Ovary (tissue), 10 donors: ENCODE measurements at regions of chr16 and their contacts with region 1.

Region 1: GRCh38 chr16:87387942-87388817 is 4.0 kb upstream of the MAP1LC3B start:
- DNase-seq: peak; percentile 86 to 95 (median 91)
- H3K4me3 ChIP-seq: peak overlapping the region; percentile 24
- H3K27ac ChIP-seq: peak overlapping the region; percentile 49 to 89
- H3K4me1 ChIP-seq: peaks cover 5% of the 10 kb centered on the region
- H3K27me3 ChIP-seq: no peaks in the 10 kb centered on the region
- CTCF ChIP-seq: peak in 1 of 3 donors; percentile 16
- EP300 ChIP-seq: peak; percentile 94
- POLR2A ChIP-seq: peak; percentile 67

Region 2: DNA sequence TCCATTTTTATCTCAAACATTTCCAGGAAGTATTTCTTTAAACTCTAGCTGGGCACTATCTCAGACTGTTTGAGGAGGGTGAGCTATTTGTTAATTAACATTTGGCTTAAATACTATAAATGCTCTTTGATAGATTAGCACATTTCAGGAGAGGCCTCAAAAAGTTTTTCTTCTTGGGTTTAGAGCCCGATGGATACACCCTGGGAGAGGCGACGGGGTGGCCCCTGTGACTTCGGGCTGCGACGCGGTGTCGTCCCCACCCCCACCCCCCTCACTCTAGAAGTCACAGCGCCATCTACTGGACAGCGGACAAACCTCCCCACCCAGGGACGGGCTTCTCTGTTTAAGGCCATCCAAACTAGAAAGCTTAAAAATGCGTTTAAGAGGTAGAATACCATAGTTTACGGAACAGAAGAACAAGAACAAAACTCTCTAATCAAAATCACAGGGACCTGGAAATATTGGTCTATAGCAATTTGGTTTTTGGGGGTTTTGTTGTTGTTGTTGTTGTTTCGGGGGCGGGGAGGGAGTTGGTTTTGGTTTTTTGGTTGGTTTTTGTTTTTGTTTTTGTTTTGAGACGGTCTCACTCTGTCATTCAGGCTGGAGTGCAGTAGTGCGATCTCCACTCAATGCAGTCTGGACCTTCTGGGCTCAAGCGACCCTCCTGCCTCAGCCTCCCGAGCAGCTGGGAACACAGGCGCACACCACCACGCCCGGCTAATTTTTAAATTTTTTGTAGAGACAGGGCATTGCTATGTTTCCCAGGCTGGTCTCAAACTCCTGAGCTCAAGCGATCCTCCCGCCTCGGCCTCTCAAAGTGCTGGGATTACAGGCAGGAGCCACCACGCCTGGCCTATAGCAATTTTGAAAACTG is 325.4 kb before region 1 on chr16:
- intact Hi-C with region 1: no loop called
- DNase-seq: peak; percentile 50 to 73 (median 59)
- H3K4me3 ChIP-seq: no peak overlapping the region
- H3K27ac ChIP-seq: no peak overlapping the region
- H3K4me1 ChIP-seq: no peaks in the 10 kb centered on the region
- H3K27me3 ChIP-seq: no peaks in the 10 kb centered on the region
- CTCF ChIP-seq: peak; percentile 31 to 47 (median 34)
- EP300 ChIP-seq: no peak
- POLR2A ChIP-seq: no peak

Region 3: DNA sequence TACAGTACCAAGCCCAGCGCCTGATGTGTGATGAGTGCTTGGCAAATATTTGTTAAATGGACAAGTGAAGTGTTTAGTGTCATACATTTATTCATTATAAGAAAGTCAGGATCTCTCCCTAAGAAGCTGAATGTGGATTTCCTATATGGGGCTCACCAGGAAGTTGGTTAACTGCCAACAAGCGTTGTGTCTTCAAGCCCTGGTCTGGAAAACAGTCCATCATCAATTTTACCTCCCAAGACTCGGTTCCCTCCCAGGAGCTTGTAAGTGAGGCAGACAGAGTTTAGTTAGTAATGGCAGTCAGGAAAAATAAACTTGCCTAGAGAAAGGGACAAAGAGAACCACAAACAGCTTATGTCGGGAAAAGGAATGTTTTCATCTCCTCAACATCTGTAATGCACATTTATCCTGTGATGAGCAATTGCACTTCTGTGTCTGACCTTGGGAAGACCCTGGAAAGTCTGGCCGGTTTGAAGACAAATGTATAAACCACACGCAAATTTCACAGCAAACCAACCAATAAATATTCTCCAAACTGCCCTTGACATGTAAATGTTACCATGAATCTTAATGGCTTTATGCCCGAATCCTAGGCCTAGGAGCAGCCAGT is 99.3 kb before region 1 on chr16:
- intact Hi-C with region 1: no loop called
- DNase-seq: no peak
- H3K4me3 ChIP-seq: no peak overlapping the region
- H3K27ac ChIP-seq: no peak overlapping the region
- H3K4me1 ChIP-seq: no peaks in the 10 kb centered on the region
- H3K27me3 ChIP-seq: no peaks in the 10 kb centered on the region
- CTCF ChIP-seq: no peak
- EP300 ChIP-seq: no peak
- POLR2A ChIP-seq: no peak

Region 4: DNA sequence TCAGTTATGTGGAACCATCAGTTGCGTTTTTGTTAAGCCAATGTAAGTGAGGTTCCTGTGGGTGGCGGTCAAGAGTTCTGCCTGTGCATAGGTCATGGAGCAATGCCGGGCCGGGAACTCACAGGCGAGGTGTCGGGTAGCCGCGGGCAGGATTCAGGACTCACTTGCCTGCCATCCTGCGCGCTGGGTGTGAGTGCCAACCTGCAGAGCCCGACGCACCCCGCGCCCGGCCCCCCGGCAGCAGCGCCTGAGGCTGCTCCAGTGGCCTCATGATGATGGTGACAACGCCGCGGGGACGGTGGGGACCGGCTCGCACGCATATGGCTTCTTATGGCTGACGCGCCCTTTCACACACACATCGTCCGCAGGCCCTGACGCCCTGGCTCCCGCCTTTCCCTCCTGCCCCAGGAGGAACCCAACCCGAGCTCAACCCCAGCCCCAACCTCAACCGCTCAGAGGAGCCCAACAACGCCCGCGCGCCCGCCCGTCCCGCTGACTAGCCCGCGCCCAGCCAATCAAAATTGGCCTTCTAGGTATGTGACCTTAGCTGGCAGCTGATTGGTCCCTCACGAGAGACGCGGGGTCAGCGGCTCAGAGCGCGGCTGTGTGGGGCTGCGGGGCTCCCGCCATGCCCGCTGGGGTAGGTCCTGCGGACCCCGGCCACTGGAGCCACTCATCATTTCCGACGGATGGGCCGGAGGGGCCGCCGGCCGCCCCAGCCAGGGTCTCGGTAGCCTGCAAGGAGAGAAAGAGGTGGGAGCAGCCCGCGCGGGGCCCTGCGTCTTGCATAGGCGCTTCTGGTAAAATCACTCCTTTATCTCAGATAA is 71.0 kb before region 1 on chr16 and contains the start of gene C16orf95:
- intact Hi-C with region 1: loop called in 2 of 4 experiments (anchors 5 to 10 kb)
- DNase-seq: peak; percentile 95 to 98 (median 98)
- H3K4me3 ChIP-seq: peak within 1 kb of the TSS; percentile 87
- H3K27ac ChIP-seq: peak within 1 kb of the TSS; percentile 87 to 88
- H3K4me1 ChIP-seq: no peaks in the 10 kb centered on the region
- H3K27me3 ChIP-seq: no peaks in the 10 kb centered on the region
- CTCF ChIP-seq: peak; percentile 39 to 75 (median 60)
- EP300 ChIP-seq: no peak
- POLR2A ChIP-seq: peak; percentile 96
- total RNA-seq, gene C16orf95: 1.0 to 6.1 (median 2.8) TPM

Region 5: DNA sequence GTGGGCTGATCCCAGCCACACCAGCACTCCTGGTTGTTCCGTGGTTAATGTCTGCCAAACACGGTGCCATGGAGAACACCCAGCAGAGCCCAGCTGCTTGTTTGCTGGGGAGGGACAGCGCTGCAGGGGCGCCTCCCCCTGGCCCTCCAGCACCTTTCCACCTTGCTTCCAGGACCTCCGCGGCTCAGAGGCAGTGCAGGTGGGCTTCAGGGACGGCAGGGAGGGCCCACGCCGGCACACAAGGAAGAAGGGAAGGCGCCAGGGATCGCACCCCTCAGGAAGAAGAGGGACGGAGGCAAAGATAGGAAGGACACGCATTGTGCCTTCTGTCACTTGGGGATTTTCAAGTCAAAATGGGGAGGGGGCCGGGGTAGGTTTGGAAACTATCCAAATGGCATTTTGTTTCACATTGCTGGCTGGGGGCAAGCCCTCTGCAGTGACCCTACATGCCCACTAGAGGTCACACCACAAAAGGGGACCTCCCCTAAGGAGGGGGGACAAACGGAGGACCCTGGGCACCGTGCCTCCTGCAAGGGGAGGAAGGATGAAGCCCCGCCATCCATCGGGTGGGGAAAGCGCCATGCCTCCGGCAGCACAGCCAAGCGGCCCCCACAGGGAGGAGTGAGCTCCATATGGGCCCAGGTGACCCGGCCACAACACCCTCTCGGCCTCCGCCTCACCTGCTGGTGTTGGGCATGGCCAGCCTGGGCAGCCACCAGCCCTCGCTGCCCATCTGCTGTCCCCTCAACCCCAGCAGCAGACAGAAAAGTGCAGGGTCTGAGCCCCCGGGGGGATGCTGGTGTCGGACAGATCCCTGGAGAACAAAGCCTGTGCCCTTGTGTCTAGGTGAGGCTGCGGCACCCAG is 63.5 kb before region 1 on chr16:
- intact Hi-C with region 1: loop called in 2 of 4 experiments (anchors 5 to 10 kb)
- DNase-seq: peak in 4 of 5 donors; percentile 44 to 59 (median 54)
- H3K4me3 ChIP-seq: no peak overlapping the region
- H3K27ac ChIP-seq: no peak overlapping the region
- H3K4me1 ChIP-seq: peaks cover 4% of the 10 kb centered on the region
- H3K27me3 ChIP-seq: no peaks in the 10 kb centered on the region
- CTCF ChIP-seq: peak; percentile 22 to 51 (median 39)
- EP300 ChIP-seq: no peak
- POLR2A ChIP-seq: no peak